Activated CD4-positive, alpha-beta T cell treated with anti-CD3 and anti-CD28 coated beads, Interleukin-2, amount 10 ng/mL, durations not matched to agents 24 days and 14 days (primary cell): ENCODE measurements at regions of chr13 and their contacts with region 1.

Region 1: GRCh38 chr13:95480131-95480545 is 72.4 kb upstream of the CLDN10 start:
- DNase-seq: peak; percentile 58
- H3K4me3 Mint-ChIP-seq: peak overlapping the region; percentile 29
- H3K27ac Mint-ChIP-seq: peak overlapping the region; percentile 58
- H3K4me1 Mint-ChIP-seq: peaks cover 13% of the 10 kb centered on the region
- H3K27me3 Mint-ChIP-seq: peaks cover 7% of the 10 kb centered on the region

Region 2: DNA sequence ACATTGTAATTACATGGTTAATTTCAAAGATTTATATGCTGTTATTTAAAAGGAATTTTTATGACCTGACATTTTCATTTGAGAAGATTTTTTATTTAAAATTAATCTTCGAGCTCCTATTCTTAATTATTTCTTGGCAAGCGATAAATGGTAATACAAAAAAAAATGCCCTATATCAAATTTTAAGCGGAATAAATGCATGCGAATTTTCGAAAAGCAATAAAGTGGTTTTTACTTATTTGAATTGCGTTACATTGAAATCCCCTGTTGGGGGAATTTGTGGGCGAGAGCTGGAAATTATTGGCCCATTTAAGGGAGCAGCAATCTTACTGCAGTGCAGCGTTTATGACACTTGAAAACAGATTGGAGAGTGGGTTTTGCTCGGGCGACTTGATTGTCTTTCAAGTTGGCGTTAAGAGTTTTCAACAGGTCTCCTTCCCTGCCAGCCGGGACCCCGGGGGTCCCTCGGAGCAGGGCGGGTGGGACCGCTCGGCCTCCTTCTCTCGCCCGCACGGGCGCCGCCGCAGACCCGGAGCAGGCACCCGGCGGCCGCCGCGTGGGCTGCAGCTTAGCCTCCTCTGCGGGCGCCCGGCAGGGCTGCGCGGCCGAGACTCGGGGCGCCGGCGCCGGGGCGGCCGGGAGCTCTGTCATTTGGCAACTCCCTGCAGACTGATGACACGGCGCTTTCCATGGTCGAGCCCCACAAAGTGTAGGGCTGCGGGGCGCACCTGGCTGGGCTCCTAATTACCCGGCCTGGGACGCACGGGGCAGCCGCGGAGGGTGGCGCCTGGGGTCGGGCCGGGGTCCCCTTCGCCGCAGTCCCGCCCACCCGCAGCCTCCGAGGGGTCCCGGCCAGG is 512.7 kb before region 1 on chr13:
- intact Hi-C with region 1: loop called (anchors 5 kb)
- DNase-seq: peak; percentile 60
- H3K4me3 Mint-ChIP-seq: no peak overlapping the region
- H3K27ac Mint-ChIP-seq: no peak overlapping the region
- H3K4me1 Mint-ChIP-seq: peaks cover 2% of the 10 kb centered on the region
- H3K27me3 Mint-ChIP-seq: peaks cover 59% of the 10 kb centered on the region

Region 3: DNA sequence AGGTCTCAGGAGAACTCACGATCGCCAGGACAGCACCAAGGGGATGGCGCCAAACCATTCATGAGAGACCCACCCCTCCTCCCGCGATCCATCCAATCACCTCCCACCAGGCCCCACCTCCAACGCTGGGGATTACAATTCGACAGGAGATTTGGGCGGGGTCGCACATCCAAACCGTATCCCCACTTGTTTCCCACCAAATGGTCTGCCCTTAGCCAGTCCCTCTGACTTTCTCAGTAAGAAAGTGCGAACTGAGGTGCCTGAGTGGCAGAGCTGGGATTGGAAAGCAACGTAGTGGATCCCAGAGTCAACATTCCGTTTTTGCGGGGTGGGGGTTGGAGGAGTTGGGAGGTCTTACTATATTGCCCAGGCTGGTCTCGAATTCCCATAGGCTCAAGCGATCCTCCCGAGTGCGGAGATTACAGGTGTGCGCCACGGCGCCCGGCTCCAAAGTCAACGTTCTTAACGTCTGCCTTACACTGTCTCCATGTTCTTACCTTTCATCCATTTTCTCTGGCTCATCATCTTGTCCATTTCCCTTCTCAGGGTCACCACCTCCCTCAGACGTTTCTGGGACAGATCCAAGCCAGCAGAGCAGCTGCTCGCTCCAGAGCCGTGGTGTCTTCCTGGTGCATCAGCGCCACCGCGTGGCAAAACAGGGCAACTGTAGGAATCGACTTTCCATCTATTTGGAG is 76.2 kb before region 1 on chr13:
- intact Hi-C with region 1: loop called (anchors 10 kb)
- DNase-seq: peak; percentile 92
- H3K4me3 Mint-ChIP-seq: peak overlapping the region; percentile 80
- H3K27ac Mint-ChIP-seq: no peak overlapping the region
- H3K4me1 Mint-ChIP-seq: peaks cover 7% of the 10 kb centered on the region
- H3K27me3 Mint-ChIP-seq: peaks cover 7% of the 10 kb centered on the region